Mammary epithelial cell (primary cell): ENCODE measurements at regions of chr2 and their contacts with region 1.

Region 1: DNA sequence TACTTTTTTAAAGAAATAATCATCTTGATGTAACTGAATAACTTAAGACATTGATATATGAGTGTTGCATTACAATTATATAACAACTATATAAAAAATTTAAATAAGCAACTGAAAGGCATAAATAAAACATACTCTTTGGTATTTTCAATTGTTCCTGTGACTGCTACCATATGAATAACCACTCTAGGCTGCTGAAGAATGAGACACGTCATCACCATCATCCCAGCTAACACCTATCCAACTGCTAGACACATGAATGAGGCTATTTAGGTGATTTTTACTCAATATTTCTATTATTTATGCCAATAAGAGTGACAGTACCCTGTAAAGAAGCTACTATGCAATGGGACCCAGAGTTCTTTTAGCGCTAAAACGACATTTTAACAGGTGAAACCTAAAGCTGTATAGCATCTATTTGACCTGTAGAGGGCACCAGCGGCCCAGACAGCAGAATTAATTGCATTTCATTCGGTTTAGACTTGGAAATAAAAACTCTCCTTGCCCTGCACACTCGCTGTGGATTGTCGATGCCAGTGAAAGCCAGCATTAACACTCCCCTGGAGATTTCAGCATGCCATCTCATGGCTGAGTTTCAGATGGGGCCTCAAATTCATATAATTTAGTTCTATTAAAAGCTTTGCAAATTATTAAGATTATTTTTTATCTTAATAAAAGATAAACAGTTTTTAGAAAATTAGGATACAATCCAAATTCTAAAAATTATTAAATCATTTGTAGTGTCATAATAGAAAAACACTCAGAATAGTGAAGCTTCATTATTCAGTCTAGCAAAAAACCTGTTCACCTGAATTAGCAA is 89.4 kb upstream of the MAP2 start:
- DNase-seq: peak; percentile 41
- H3K4me3 ChIP-seq: no peak overlapping the region
- H3K27ac ChIP-seq: no peak overlapping the region
- H3K4me1 ChIP-seq: peaks cover 4% of the 10 kb centered on the region
- H3K27me3 ChIP-seq: no peaks in the 10 kb centered on the region
- CTCF ChIP-seq: peak; percentile 87 to 96

Region 2: GRCh38 chr2:208392300-208393080 is 941.9 kb before region 1 on chr2:
- CTCF ChIA-PET with region 1: interaction called, 3 read pairs
- dilution Hi-C with region 1: no loop called
- in situ Hi-C with region 1: no loop called
- intact Hi-C with region 1: loop called (anchors 2 kb)
- DNase-seq: no peak
- H3K4me3 ChIP-seq: no peak overlapping the region
- H3K27ac ChIP-seq: no peak overlapping the region
- H3K4me1 ChIP-seq: no peaks in the 10 kb centered on the region
- H3K27me3 ChIP-seq: no peaks in the 10 kb centered on the region
- CTCF ChIP-seq: peak; percentile 17 to 20

Region 3: GRCh38 chr2:208820014-208820688 is 514.3 kb before region 1 on chr2:
- CTCF ChIA-PET with region 1: no interaction called
- dilution Hi-C with region 1: no loop called
- in situ Hi-C with region 1: no loop called
- intact Hi-C with region 1: loop called (anchors 1 kb)
- DNase-seq: peak; percentile 13
- H3K4me3 ChIP-seq: no peak overlapping the region
- H3K27ac ChIP-seq: no peak overlapping the region
- H3K4me1 ChIP-seq: no peaks in the 10 kb centered on the region
- H3K27me3 ChIP-seq: no peaks in the 10 kb centered on the region
- CTCF ChIP-seq: peak; percentile 15 to 52

Region 4: GRCh38 chr2:209577376-209578357 is 243.3 kb after region 1 on chr2:
- CTCF ChIA-PET with region 1: no interaction called
- dilution Hi-C with region 1: no loop called
- in situ Hi-C with region 1: loop called in 1 of 2 experiments (anchors 25 kb)
- intact Hi-C with region 1: loop called (anchors 1 kb)
- DNase-seq: no peak
- H3K4me3 ChIP-seq: no peak overlapping the region
- H3K27ac ChIP-seq: no peak overlapping the region
- H3K4me1 ChIP-seq: no peaks in the 10 kb centered on the region
- H3K27me3 ChIP-seq: no peaks in the 10 kb centered on the region
- CTCF ChIP-seq: peak; percentile 32 to 41

Region 5: GRCh38 chr2:209960676-209961630 is 626.5 kb after region 1 on chr2:
- CTCF ChIA-PET with region 1: no interaction called
- dilution Hi-C with region 1: no loop called
- in situ Hi-C with region 1: loop called in 1 of 2 experiments (anchors 25 kb)
- intact Hi-C with region 1: loop called (anchors 1 kb)
- DNase-seq: peak; percentile 19
- H3K4me3 ChIP-seq: no peak overlapping the region
- H3K27ac ChIP-seq: no peak overlapping the region
- H3K4me1 ChIP-seq: no peaks in the 10 kb centered on the region
- H3K27me3 ChIP-seq: peaks cover 2% of the 10 kb centered on the region
- CTCF ChIP-seq: peak; percentile 76 to 79